PC-3 (cell line): ENCODE measurements at regions of chr1 and their contacts with region 1.

Region 1: GRCh38 chr1:211514030-211514754 is 22.2 kb upstream of the RD3 start:
- DNase-seq: peak; percentile 95
- ATAC-seq: peak; percentile 80
- H3K4me3 ChIP-seq: peak overlapping the region; percentile 21; the same call in 1 of the 2 replicates
- H3K27ac ChIP-seq: no peak overlapping the region
- H3K4me1 ChIP-seq: peaks cover 28% of the 10 kb centered on the region
- H3K27me3 ChIP-seq: no peaks in the 10 kb centered on the region
- CTCF ChIP-seq: peak; percentile 92

Region 2: DNA sequence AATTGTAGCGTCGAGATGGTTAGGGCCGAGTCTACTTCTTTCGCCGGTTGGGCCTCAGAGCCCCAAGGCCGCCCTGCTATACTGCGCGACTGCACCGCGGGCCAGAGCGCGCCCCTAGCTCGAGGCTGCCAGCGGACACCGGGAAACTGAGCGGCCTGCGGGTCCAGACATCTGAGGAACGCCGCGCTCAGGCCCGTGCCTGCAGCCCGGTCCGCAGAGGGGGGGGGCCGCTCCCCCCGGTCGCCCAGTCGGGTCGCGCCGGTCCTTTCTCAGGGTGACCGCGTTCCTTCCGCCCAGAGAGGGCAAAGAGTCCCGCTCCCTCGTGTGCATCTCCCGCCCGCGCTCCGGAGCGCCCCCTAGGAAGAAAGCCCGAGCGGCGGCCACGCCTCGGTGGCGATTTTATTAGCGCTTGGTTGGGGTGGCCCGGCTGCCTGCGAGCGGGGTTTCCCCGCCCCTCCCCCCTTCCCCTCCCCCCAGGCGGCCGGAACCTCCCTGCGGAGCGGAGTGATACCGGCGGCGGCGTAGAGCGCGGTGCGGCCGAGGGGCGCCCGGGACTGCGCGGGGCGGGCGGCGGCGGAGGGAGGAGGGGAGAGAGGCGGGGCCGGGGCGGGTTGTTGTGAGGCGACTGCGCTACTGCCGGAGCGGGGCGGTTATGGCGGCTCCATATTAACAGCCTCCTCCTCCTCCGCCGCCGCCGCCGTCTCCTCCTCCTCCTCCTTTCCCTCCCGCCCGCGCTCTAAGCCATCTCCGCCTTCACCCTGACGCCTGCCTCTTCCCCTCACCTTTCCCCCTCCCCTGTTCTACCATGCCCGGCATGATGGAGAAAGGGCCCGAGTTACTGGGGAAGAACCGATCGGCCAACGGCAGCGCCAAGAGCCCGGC is 255.2 kb before region 1 on chr1 and contains the start of gene RCOR3:
- CTCF ChIA-PET with region 1: no interaction called
- POLR2A ChIA-PET with region 1: no interaction called
- intact Hi-C with region 1: loop called (anchors 10 kb)
- DNase-seq: peak; percentile 89
- ATAC-seq: peak; percentile 70
- H3K4me3 ChIP-seq: peak within 1 kb of the TSS; percentile 98
- H3K27ac ChIP-seq: peak within 1 kb of the TSS; percentile 77
- H3K4me1 ChIP-seq: peaks cover 17% of the 10 kb centered on the region
- H3K27me3 ChIP-seq: no peaks in the 10 kb centered on the region
- CTCF ChIP-seq: peak; percentile 51
- total RNA-seq, gene RCOR3: 12.7 and 20.4 TPM in 2 replicates

Region 3: DNA sequence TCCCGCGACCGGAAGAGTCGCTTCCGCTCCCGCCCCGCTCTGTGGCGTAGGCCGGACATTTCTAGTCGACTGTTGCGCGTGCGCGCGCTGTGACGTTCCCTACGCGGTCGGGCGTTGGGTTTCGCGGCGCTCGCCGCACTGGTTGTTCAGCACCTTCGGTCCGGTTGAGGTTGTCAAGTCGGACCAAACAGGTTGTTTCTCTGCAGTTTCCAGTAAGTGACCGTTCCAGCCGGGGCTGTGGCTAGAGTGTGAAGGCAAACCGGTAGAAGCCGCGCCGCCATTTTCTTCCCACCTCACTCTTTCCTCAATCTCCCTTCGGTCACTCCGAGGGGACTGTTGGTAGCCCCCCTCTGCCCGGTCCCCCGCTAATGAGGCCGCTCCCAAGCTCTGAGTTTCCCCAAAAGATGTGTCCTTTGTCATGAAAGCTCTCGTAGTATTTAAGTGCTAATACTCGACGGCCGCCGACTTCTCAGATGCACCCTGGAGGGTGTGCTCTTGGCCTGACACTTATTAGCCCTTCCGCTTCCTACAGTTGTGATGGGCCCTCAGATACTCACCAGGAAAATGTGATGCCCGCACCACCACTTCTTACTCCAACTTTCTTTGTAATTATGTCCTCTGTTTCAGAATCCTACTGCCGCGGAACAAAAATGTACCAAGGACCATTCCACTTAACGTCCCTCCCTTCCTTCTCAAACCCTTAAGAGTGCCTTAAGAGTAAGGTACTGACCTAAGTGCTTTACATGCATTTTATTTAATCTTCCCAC is 131.3 kb before region 1 on chr1:
- CTCF ChIA-PET with region 1: no interaction called
- POLR2A ChIA-PET with region 1: no interaction called
- intact Hi-C with region 1: loop called (anchors 1 kb)
- DNase-seq: peak; percentile 97
- ATAC-seq: peak; percentile 96
- H3K4me3 ChIP-seq: peak overlapping the region; percentile 86
- H3K27ac ChIP-seq: peak overlapping the region; percentile 77
- H3K4me1 ChIP-seq: peaks cover 25% of the 10 kb centered on the region
- H3K27me3 ChIP-seq: no peaks in the 10 kb centered on the region
- CTCF ChIP-seq: no peak

Region 4: DNA sequence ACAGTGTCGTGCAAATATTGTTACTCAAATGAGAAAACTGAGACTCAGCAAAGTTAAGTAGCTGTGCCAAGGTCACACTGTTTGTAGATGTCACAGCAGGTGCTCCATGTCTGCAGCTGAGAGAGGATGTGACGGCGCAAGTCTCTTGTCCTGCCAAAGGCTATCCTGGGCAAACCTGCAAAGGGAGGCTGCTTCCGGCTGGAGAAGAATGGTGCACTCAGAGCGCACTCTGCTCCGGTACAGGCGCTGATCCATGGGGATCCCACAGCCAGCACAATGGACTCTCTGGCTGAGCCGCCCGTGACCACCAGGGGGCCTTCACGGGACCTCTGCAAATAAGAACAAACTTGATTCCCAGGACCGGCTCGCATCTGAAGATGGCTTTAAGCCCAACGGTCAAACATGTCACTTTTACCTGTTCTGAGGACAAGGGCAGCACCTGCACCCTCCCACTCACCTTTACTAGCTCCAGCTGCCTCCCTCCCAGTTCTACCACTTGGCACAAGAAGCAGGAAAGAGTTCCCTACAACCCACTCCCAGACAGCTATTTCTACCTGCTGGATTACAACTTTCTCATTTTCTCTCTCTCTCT is 44.2 kb before region 1 on chr1:
- CTCF ChIA-PET with region 1: interaction called, 3 read pairs
- POLR2A ChIA-PET with region 1: no interaction called
- intact Hi-C with region 1: loop called (anchors 1 kb)
- DNase-seq: peak; percentile 87
- ATAC-seq: peak; percentile 99
- H3K4me3 ChIP-seq: no peak overlapping the region
- H3K27ac ChIP-seq: no peak overlapping the region
- H3K4me1 ChIP-seq: peaks cover 2% of the 10 kb centered on the region; the same call in 1 of the 2 replicates
- H3K27me3 ChIP-seq: peaks cover 13% of the 10 kb centered on the region
- CTCF ChIP-seq: peak; percentile 96

Region 5: DNA sequence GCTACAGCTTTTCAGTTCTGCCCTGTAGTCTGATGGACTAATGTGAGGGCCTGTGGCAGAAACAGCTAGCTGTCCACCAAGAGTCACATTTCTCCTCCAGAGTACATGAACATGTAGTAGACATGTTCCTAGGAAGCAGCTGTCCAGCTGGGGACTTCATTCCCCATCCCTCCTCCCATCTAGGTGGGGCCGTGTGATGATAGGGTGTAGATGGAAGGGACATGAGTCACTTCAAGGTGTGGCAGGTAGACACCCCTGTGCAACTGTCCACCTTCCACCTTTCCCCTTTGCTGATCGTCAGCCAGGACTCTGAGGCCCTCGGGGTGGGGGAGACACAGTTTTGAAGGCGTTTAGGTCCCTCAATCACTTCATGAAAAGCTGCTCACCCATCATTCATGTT is 18.6 kb before region 1 on chr1:
- CTCF ChIA-PET with region 1: interaction called, 13 read pairs
- POLR2A ChIA-PET with region 1: no interaction called
- intact Hi-C with region 1: no loop called
- DNase-seq: peak; percentile 46
- ATAC-seq: peak; percentile 32; the same call in 1 of the 2 replicates
- H3K4me3 ChIP-seq: no peak overlapping the region
- H3K27ac ChIP-seq: no peak overlapping the region
- H3K4me1 ChIP-seq: peaks cover 6% of the 10 kb centered on the region; the same call in 1 of the 2 replicates
- H3K27me3 ChIP-seq: no peaks in the 10 kb centered on the region
- CTCF ChIP-seq: no peak

Region 6: DNA sequence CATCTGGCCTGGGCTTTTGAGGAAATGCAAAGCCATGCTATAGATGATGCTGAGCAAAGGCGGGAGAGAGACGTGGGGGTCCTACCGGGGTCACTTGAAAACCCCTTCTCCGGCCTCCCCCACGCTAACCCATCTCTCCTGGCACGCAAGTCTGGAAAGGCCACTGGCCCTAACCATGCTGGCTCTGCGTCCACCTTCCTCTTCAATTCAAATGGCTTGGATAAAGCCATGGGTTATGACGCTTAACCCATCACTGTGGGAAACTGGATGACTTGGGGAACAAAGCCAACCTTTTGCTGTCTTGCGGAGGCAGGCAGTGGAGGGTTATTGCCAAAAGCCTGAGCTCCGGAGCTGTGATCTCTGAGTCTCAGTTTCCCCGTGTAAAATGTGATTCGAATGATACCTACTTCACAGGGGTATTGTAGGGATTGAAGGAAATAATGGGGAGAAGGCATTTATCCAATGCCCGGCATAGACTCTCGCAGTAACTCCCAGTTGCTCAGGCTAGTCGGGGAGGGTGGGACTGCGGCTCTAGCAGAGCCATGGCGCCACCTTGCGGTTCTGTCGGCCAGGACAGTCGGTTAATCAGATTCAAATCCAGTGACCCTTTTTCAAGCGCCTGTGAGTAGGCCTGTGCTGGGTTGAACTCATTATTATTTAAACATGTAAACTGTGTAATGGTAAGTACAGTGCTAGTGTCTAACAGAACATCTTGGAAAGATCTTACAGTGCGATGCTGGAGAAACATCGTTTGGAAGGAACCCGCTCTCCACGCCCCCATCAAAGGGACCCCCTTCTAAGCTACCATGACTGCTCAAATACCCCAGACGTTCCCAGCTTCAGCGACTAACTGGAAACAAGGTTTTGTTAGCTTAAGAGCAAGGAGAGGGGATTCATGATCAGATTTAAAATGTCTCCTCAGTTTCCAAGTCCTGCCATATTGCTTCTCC is 140.9 kb after region 1 on chr1:
- CTCF ChIA-PET with region 1: no interaction called
- POLR2A ChIA-PET with region 1: no interaction called
- intact Hi-C with region 1: loop called (anchors 1 kb)
- DNase-seq: peak; percentile 93
- ATAC-seq: peak; percentile 88
- H3K4me3 ChIP-seq: no peak overlapping the region
- H3K27ac ChIP-seq: no peak overlapping the region
- H3K4me1 ChIP-seq: peaks cover 13% of the 10 kb centered on the region
- H3K27me3 ChIP-seq: no peaks in the 10 kb centered on the region
- CTCF ChIP-seq: peak; percentile 99